HEK293T (cell line): ENCODE measurements at regions of chr6 and their contacts with region 1.

Region 1: DNA sequence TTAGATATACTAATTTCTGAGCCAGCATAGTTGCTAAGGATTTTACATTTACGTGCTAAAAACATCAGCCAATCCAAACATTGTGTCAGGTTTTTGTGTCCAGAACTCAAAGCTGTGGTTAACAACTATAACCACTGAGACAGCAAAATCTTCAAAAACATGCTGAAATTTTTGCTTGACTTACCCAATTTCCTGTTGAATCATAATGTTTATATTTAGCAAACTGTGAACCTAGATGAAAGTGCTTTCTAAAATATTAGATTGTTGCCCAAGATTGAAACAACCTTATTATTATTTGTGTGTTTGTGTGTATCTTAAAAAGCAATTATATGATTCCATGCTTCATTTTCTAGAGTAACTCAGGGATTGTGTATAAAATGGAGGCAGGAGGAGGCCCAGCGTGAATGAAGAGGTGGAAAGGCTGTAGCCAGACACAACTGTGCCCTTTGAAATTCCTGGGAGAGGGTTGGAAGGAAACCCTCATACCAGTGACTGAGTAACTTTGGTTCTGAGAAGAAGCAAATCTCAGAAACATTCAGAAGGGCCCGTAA is 48.0 kb downstream of the ARMC2 start:
- DNase-seq: no peak

Region 2: DNA sequence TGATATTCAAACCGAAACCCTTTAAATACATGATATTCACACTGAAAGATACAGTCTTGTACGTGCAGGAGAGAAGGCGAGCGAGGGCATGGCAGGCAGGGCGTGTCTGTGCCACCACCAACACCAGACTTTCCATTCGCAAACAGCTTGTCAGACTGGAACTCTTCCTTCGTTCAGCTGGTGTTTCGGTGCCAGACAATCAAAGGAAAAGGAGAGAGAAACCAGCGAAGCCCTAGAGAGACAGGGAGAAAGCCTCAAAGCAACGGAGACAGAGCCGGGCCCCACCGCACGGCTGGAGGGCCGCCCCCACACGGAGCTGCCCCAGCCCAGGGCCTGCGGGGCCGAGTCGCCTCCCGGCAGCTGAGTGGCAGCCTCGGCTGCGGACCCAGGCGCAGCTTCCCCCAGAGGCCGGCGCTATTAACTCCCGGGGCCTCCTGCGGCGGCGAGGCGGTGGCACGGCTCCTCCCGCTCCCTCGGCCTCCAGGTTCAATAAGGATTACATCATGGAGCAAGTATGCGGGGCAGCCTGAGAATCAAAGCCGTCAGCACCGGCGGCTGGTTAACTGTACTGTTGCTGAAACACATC is 762.5 kb before region 1 on chr6:
- CTCF ChIA-PET with region 1: no interaction called
- POLR2A ChIA-PET with region 1: no interaction called
- DNase-seq: peak; percentile 88

Region 3: GRCh38 chr6:108684701-108685329 is 211.4 kb before region 1 on chr6:
- CTCF ChIA-PET with region 1: no interaction called
- POLR2A ChIA-PET with region 1: no interaction called
- DNase-seq: peak; percentile 52

Region 4: DNA sequence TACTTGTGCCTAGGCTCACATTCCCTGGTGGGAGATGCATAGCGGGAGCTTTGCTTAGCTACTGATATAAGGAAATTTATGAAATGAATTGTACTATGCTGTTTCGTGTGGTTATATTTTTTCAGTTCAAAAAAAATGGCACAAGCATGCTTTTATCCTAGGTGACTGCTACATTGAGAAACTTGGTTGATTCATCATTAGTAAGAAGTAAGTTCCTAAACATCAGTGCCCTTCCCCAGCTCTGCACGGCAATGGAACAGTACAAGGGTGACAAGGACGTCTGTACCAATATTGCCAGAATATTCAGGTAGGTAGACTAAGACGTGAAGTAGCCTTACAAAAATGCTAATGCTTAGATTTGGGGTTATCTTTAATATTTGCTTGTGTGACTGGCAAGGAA is 31.7 kb after region 1 on chr6:
- CTCF ChIA-PET with region 1: no interaction called
- POLR2A ChIA-PET with region 1: no interaction called
- DNase-seq: no peak

Region 5: DNA sequence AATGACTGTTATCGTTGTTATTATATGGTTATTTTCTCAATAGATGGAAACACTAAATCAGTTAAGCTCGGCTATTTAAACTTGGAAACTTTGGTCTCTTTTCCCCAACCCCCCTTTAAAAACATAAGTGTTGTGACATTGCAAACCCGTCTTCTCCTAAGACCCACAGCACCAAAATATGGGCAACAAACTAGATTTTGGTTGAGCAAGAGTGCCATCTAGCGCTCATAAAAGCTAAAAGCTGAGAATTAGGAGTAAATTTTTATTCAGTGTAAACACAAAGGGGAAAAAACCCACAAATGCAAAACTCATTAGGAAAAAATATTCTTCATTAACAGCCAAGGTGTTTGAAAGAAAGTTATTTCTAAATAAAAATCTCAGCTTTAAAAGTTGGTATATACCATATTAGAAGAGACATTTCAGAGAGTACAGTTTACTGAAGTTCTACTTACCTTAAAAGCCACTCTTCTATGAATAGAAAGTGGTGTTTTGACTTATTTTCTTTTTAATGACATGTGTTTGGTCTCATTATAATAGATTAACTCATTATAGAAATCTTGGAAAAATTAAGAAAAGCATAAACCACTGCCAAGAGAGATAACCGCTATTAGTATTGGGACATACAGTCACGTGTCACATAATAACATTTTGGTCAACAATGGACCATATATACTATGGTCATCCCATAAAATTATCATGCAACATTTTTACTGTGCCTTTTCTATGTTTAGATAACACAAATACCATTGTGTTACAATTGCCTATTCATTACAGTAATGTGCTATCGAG is 177.4 kb after region 1 on chr6:
- CTCF ChIA-PET with region 1: interaction called, 13 read pairs
- POLR2A ChIA-PET with region 1: no interaction called
- DNase-seq: peak; percentile 40